ENCODE measurements at regions of chr6 and their contacts with region 1.

Region 1: GRCh38 chr6:75208298-75209183 is 2.7 kb upstream of the COL12A1 start:
- DNase-seq: peak; percentile 89
- H3K4me3 Mint-ChIP-seq: peak overlapping the region; percentile 49
- H3K27ac Mint-ChIP-seq: no peak overlapping the region
- H3K4me1 Mint-ChIP-seq: peaks cover 47% of the 10 kb centered on the region
- H3K27me3 Mint-ChIP-seq: peaks cover 64% of the 10 kb centered on the region

Region 2: DNA sequence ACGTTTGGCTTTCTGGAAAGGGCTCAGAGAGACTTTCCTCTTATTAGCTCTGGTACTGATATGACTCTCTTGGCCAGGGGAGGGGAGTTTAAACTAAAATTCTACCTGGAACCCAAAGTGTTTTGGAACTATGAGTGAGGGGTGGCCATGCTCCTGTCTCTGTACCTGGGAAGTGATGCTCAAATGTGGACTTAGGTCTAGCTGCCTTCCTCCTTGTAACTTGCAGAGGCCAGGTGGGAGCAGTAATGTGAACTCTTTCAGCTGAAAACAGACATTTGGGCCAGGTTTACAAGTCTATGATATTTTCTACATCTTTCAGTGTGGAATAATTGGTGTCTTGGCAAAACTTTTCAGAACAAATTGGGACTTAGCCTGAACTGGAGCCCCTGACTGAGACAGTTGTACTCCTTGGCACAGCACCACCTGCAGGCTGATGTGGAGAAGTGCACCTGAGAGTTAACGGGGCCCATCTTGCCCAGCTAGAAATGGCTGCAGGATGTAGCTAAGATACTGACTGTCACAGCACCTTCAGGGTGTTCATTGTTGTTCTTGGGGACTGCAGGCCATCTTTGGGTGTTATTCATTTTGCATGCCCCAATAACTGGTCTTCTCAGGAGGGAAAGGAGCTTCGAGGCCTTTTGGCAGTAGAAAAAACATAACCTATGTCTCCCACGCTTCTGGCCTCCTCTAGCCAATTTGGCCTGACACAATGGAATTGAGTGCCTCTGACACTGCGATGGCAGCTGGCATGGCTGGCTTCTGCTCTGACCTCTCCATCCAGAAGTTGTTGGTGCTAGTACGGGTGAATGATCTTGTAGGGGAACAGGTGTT is 1475.5 kb before region 1 on chr6:
- CTCF ChIA-PET with region 1: interaction called, 169 read pairs
- POLR2A ChIA-PET with region 1: no interaction called
- intact Hi-C with region 1: loop called (anchors 2 kb)
- DNase-seq: peak; percentile 81
- H3K4me3 Mint-ChIP-seq: no peak overlapping the region
- H3K27ac Mint-ChIP-seq: no peak overlapping the region
- H3K4me1 Mint-ChIP-seq: peaks cover 10% of the 10 kb centered on the region
- H3K27me3 Mint-ChIP-seq: no peaks in the 10 kb centered on the region

Region 3: DNA sequence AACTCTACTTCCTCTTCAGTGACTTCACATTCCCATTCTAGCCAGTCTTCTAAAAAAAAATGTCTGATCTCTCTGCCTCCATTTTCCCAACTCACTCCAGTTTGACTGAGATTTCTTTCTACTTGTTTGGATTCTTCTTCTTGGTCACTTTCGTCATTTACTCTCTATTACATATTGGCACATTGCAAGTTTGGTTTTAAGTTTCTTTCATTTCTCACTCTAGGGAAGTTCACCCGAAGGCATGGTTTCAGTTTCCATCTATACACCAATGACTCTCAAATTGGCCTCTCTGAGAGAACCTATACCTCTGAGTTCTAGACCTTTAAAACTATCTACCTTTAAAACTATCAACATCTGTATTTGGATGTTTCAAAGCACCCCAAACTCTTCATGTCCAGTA is 1461.3 kb before region 1 on chr6:
- CTCF ChIA-PET with region 1: interaction called, 169 read pairs
- POLR2A ChIA-PET with region 1: no interaction called
- intact Hi-C with region 1: no loop called
- DNase-seq: no peak
- H3K4me3 Mint-ChIP-seq: no peak overlapping the region
- H3K27ac Mint-ChIP-seq: no peak overlapping the region
- H3K4me1 Mint-ChIP-seq: no peaks in the 10 kb centered on the region
- H3K27me3 Mint-ChIP-seq: no peaks in the 10 kb centered on the region

Region 4: DNA sequence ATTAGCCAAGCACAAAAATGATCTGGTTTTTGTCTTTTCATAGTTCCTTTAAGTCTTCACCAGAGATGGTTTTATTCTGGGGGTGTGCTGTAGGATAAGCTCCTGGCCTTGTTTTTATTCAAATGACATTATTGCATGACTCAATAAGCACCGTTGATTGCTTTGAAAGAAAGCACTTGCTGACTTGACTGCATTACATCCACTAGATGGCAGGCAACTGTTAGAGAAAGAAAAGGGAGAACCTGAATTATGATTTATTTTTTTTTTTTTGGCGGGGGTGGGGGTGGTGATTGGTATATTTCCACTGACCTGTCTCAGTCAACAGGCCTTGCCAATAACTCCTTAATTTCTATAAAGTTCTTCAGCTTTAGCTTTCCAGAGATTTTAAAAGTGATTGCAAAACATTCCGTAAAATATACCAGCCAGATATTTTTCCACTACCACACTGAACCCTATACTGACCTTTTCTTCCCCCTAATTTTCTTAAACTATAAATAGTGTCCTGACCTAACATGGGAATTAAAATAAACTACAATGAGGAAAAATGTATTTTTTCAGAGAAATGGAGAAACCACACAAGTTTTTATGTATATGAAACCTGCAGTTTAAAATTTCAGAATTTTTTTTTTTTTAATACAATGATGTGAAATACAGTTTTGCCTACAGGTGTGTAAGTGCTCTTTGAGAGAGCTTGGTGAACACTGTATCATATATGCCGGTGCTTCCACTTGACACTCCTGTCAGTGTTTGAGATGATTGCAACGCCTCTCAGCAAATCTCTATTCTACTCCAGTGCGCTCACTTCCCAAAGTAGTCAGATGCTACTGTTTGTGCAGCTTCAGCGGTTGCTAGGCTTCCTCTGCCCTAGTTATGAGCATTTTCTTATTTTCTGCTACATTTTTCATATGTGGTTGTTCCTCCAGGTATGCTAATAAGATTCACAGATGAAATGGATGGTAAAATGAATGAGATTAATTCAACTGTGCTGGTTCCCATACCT is 1238.3 kb before region 1 on chr6:
- CTCF ChIA-PET with region 1: interaction called, 4 read pairs
- POLR2A ChIA-PET with region 1: no interaction called
- intact Hi-C with region 1: loop called (anchors 1 kb)
- DNase-seq: no peak
- H3K4me3 Mint-ChIP-seq: no peak overlapping the region
- H3K27ac Mint-ChIP-seq: no peak overlapping the region
- H3K4me1 Mint-ChIP-seq: no peaks in the 10 kb centered on the region
- H3K27me3 Mint-ChIP-seq: peaks cover 1% of the 10 kb centered on the region

Region 5: GRCh38 chr6:74574794-74575193 is 633.7 kb before region 1 on chr6:
- CTCF ChIA-PET with region 1: interaction called, 3 read pairs
- POLR2A ChIA-PET with region 1: no interaction called
- intact Hi-C with region 1: loop called (anchors 10 kb)
- DNase-seq: no peak
- H3K4me3 Mint-ChIP-seq: no peak overlapping the region
- H3K27ac Mint-ChIP-seq: no peak overlapping the region
- H3K4me1 Mint-ChIP-seq: no peaks in the 10 kb centered on the region
- H3K27me3 Mint-ChIP-seq: no peaks in the 10 kb centered on the region

Region 6: DNA sequence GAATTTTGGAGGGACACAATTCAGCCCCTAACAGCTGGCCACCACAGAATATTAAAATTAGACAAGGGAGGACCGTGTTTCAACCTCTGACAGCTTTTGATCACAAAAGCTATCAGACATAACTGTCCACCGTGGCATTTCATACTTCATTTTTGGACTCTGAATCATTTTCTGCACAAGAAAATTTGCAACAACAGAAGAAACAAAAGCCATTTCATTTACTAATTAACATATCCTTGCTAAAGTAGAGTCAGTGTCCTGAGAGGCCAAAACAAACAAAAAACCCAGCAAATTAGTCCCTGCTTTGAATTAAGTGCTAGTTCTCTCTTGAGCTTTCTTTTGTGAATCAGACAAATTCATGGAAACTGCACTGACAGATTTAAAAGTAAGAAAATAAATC is 14.9 kb after region 1 on chr6:
- CTCF ChIA-PET with region 1: interaction called, 34 read pairs
- POLR2A ChIA-PET with region 1: no interaction called
- intact Hi-C with region 1: no loop called
- DNase-seq: no peak
- H3K4me3 Mint-ChIP-seq: no peak overlapping the region
- H3K27ac Mint-ChIP-seq: no peak overlapping the region
- H3K4me1 Mint-ChIP-seq: no peaks in the 10 kb centered on the region
- H3K27me3 Mint-ChIP-seq: peaks cover 12% of the 10 kb centered on the region

Region 7: DNA sequence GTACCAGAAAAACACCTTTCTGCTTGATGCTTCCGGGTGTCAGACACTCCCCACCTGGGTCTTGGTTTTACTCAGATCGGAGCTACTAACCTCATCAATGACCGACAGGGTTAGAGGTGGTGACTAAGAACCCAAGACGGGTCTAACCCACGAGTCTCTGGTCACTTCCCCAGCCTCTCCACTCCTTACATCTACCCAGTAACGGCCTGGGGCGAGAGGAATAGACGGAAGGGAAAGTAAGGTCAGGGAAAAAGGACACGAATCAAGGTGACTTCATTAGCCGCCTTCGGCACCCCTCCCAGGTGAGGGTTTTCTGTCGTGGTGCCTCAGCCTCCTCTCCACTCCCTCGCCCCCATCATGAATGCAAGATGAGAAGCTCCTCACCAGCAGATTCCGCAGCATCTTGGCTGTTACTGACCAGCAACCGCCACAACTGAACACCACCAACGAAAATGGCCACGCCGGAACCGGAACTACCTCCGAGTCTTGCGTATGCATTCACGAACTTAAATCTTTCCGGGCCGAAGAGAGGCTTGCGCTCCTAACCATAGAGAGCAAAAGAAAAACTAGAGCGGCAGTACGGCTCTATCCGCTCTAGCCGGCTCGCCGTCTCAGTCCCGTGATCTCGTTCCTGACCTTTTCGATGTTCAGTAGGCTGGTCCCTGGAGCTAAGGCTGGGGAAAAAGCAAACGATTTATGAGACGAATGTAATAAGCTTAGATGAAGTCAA is 35.0 kb after region 1 on chr6 and contains the start of gene COX7A2:
- CTCF ChIA-PET with region 1: interaction called, 11 read pairs
- POLR2A ChIA-PET with region 1: no interaction called
- intact Hi-C with region 1: no loop called
- DNase-seq: peak; percentile 92
- H3K4me3 Mint-ChIP-seq: peak within 1 kb of the TSS; percentile 100
- H3K27ac Mint-ChIP-seq: peak within 1 kb of the TSS; percentile 100
- H3K4me1 Mint-ChIP-seq: peaks cover 26% of the 10 kb centered on the region
- H3K27me3 Mint-ChIP-seq: peaks cover 9% of the 10 kb centered on the region
- total RNA-seq, gene COX7A2: 564 to 566 TPM

Region 8: DNA sequence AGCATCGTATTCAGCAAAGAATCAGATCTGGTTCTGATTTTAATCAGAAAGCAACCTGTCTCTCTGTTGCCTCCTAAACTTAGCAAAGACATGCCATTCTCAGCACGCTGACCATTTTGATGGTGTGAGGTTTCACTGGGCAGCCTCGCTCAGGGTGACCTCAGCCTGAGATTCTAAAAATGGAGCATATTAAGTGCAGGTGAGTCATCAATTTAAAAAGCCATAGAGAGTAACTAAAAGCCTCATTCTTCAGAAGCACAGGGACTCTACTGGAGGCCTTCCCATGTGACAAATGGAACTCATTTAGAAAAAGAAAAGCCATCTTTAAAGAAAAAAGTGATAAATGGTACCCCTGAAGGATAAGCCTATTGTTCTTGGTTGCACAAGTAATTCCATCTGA is 193.8 kb after region 1 on chr6:
- CTCF ChIA-PET with region 1: no interaction called
- POLR2A ChIA-PET with region 1: no interaction called
- intact Hi-C with region 1: no loop called
- DNase-seq: no peak
- H3K4me3 Mint-ChIP-seq: no peak overlapping the region
- H3K27ac Mint-ChIP-seq: no peak overlapping the region
- H3K4me1 Mint-ChIP-seq: no peaks in the 10 kb centered on the region
- H3K27me3 Mint-ChIP-seq: peaks cover 3% of the 10 kb centered on the region